ENCODE measurements at regions of chr2 and their contacts with region 1.

Region 1: GRCh38 chr2:172513935-172514586 is 41.8 kb upstream of the PDK1 start:
- DNase-seq: no peak
- ATAC-seq: peak; percentile 74
- H3K4me3 ChIP-seq: no peak overlapping the region
- H3K4me3 Mint-ChIP-seq: no peak overlapping the region
- H3K27ac ChIP-seq: no peak overlapping the region
- H3K27ac Mint-ChIP-seq: peak overlapping the region in 2 of 9 donors; percentile 22 to 67
- H3K4me1 ChIP-seq: peaks cover 0 to 15% of the 10 kb centered on the region in 2 donors
- H3K4me1 Mint-ChIP-seq: peaks cover 11 to 47% (median 26%) of the 10 kb centered on the region in 7 donors
- H3K27me3 ChIP-seq: no peaks in the 10 kb centered on the region
- H3K27me3 Mint-ChIP-seq: no peaks in the 10 kb centered on the region

Region 2: DNA sequence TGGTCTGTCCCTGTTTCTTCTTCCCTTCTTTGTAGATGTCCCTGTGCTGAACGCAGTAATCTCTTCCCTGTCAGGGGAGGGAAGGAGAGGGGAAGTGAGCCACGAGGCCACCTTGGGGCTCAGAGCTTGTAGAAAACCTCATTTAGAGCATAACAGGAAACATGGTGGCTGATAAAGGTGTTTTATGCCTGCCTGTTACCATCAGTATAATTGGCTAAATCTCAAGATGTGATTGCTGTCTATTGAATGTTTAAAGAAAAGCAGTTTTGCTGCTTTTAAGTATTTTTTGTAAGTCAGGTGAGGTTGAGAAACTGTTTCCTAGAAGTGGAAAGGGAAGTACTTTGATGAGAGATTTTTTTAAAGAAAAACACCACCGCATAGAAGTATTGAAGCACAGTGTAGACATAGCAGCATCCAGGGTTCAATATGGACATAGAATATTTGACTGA is 17.9 kb before region 1 on chr2:
- CTCF ChIA-PET with region 1: no interaction called
- POLR2A ChIA-PET with region 1: interaction called, 5 read pairs
- intact Hi-C with region 1: loop called in 1 of 2 experiments (anchors 1 kb)
- DNase-seq: peak in 7 of 9 donors; percentile 72 to 88 (median 83)
- ATAC-seq: peak; percentile 94
- H3K4me3 ChIP-seq: peak overlapping the region; percentile 22
- H3K4me3 Mint-ChIP-seq: peak overlapping the region; percentile 54 to 86 (median 77)
- H3K27ac ChIP-seq: peak overlapping the region; percentile 68
- H3K27ac Mint-ChIP-seq: peak overlapping the region; percentile 86 to 99 (median 97)
- H3K4me1 ChIP-seq: peaks cover 22 to 83% of the 10 kb centered on the region in 2 donors
- H3K4me1 Mint-ChIP-seq: peaks cover 32 to 94% (median 85%) of the 10 kb centered on the region in 7 donors
- H3K27me3 ChIP-seq: no peaks in the 10 kb centered on the region
- H3K27me3 Mint-ChIP-seq: no peaks in the 10 kb centered on the region